Esophagus muscularis mucosa (tissue), 4 donors: ENCODE measurements at regions of chr17 and their contacts with region 1.

Region 1: DNA sequence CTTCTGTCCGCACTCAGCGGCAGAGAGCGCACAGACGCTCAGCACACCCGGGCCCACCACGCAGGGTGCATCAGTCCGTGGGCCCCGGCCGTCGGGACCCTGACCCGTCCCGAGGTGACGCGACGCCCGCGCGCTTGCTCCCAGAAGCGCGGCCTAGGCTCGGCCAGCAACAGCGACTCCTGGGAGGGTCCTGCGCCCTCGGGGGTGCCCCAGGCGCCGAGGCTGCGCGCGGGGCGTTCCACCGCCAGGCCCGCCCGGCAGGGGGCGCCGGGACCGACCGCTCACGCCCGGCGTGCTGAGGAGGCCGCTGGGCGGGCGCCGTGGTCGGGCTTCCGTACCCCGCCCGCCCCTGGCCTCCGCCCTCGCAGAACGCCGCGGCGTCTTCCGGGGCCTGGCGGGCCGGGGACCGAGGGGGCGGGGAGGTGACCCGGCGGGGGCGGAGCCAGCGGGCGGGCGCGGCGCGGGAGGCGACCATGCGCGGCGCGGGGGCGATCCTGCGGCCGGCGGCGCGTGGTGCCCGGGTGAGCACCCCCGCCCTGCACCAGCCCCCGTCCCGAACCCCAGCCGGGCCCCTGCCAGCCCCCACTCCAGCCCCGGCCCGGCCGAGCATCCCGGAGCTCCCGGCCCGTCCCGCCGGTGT is at the start of gene CISD3:
- DNase-seq: no peak
- H3K4me3 ChIP-seq: peak within 1 kb of the TSS; percentile 74 to 93 (median 85)
- H3K27ac ChIP-seq: peak within 1 kb of the TSS; percentile 87 to 92 (median 88)
- H3K4me1 ChIP-seq: peaks cover 46 to 61% (median 59%) of the 10 kb centered on the region in 4 donors
- H3K27me3 ChIP-seq: no peaks in the 10 kb centered on the region
- CTCF ChIP-seq: peak; percentile 81 to 92 (median 90)
- EP300 ChIP-seq: no peak
- POLR2A ChIP-seq: no peak
- total RNA-seq, gene CISD3: 10.1 to 18.5 (median 18.0) TPM

Region 2: GRCh38 chr17:38693700-38694329 is 36.2 kb before region 1 on chr17:
- intact Hi-C with region 1: loop called (anchors 5 kb)
- DNase-seq: peak; percentile 97
- H3K4me3 ChIP-seq: peak overlapping the region in 1 of 4 donors; percentile 7
- H3K27ac ChIP-seq: peak overlapping the region; percentile 76 to 89 (median 86)
- H3K4me1 ChIP-seq: peaks cover 15 to 19% (median 18%) of the 10 kb centered on the region in 4 donors
- H3K27me3 ChIP-seq: no peaks in the 10 kb centered on the region
- CTCF ChIP-seq: peak in 1 of 3 experiments; percentile 8
- EP300 ChIP-seq: no peak
- POLR2A ChIP-seq: no peak

Region 3: GRCh38 chr17:38799378-38800236 is 69.6 kb after region 1 on chr17 and contains the start of gene PIP4K2B:
- intact Hi-C with region 1: loop called (anchors 10 kb)
- DNase-seq: peak; percentile 99
- H3K4me3 ChIP-seq: peak within 1 kb of the TSS; percentile 78 to 95 (median 92)
- H3K27ac ChIP-seq: peak within 1 kb of the TSS; percentile 97 to 100 (median 98)
- H3K4me1 ChIP-seq: peaks cover 29 to 42% (median 42%) of the 10 kb centered on the region in 4 donors
- H3K27me3 ChIP-seq: no peaks in the 10 kb centered on the region
- CTCF ChIP-seq: peak in 1 of 3 experiments; percentile 13
- EP300 ChIP-seq: no peak
- POLR2A ChIP-seq: no peak
- total RNA-seq, gene PIP4K2B: 39.5 to 72.1 (median 53.2) TPM